Left ventricle myocardium inferior (tissue), 1 donor: ENCODE measurements at regions of chr21 and their contacts with region 1.

Region 1: GRCh38 chr21:34202553-34203372 is 129.4 kb downstream of the MRPS6 start:
- DNase-seq: peak; percentile 25
- H3K4me3 ChIP-seq: peak overlapping the region; percentile 68
- H3K27ac ChIP-seq: peak overlapping the region; percentile 1
- H3K4me1 ChIP-seq: peaks cover 39% of the 10 kb centered on the region
- H3K27me3 ChIP-seq: no peaks in the 10 kb centered on the region
- CTCF ChIP-seq: no peak

Region 2: GRCh38 chr21:33915368-33916199 is 287.2 kb before region 1 on chr21 and contains the start of gene ATP5PO:
- intact Hi-C with region 1: loop called (anchors 10 kb)
- DNase-seq: peak; percentile 98
- H3K4me3 ChIP-seq: peak within 1 kb of the TSS; percentile 89
- H3K27ac ChIP-seq: peak within 1 kb of the TSS; percentile 95
- H3K4me1 ChIP-seq: peaks cover 52% of the 10 kb centered on the region
- H3K27me3 ChIP-seq: no peaks in the 10 kb centered on the region
- CTCF ChIP-seq: no peak
- total RNA-seq, gene ATP5PO: 780 TPM

Region 3: DNA sequence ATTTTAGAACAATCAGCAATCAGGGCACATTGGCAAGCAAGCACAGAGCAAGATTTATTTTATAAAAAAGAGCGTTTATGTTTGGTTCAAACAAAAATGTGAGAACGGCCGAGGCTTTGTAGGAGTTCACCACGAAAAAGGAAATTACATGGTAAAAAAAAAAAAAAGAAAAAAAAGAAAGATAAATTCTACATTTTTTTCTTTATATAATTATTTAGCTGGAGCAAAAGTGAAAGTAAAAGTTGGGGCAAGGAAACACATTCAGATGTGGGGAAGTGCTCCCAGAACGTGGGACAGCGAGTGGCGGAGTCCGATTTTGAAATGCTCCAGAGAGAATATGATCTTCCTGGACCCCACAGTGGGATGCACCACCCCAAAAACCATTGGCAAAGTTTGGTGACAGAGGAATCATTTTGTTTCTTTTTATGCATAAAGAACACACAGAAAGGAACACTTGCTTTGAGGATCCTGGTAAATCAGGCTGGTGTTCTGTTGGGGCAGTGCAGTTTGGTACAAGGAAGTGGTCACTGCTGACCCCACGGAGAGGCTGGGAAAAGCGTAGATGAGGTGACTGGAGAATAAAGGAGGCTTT is 270.9 kb before region 1 on chr21:
- intact Hi-C with region 1: no loop called
- DNase-seq: no peak
- H3K4me3 ChIP-seq: peak overlapping the region; percentile 62
- H3K27ac ChIP-seq: peak overlapping the region; percentile 66
- H3K4me1 ChIP-seq: peaks cover 18% of the 10 kb centered on the region
- H3K27me3 ChIP-seq: no peaks in the 10 kb centered on the region
- CTCF ChIP-seq: no peak

Region 4: GRCh38 chr21:34280389-34280795 is 77.6 kb after region 1 on chr21:
- intact Hi-C with region 1: no loop called
- DNase-seq: peak; percentile 53
- H3K4me3 ChIP-seq: no peak overlapping the region
- H3K27ac ChIP-seq: peak overlapping the region; percentile 46
- H3K4me1 ChIP-seq: no peaks in the 10 kb centered on the region
- H3K27me3 ChIP-seq: no peaks in the 10 kb centered on the region
- CTCF ChIP-seq: no peak